ENCODE measurements at regions of chr6 and their contacts with region 1.

Region 1: GRCh38 chr6:21589352-21590345 is 3.9 kb upstream of the SOX4 start:
- DNase-seq: peak; percentile 92 to 97
- H3K4me3 ChIP-seq: peak overlapping the region; percentile 67 to 86 (median 73)
- H3K27ac ChIP-seq: peak overlapping the region; percentile 89 to 93 (median 90)
- H3K4me1 ChIP-seq: peaks cover 11 to 33% (median 28%) of the 10 kb centered on the region in 4 donors
- H3K27me3 ChIP-seq: no peaks in the 10 kb centered on the region
- CTCF ChIP-seq: peak in 5 of 7 experiments; percentile 77 to 89 (median 80)
- EP300 ChIP-seq: no peak
- POLR2A ChIP-seq: no peak

Region 2: GRCh38 chr6:20564269-20564668 is 1025.4 kb before region 1 on chr6:
- intact Hi-C with region 1: loop called (anchors 10 kb)
- DNase-seq: peak in 1 of 2 donors; percentile 55
- H3K4me3 ChIP-seq: no peak overlapping the region
- H3K27ac ChIP-seq: no peak overlapping the region
- H3K4me1 ChIP-seq: peaks cover 0 to 17% (median 6%) of the 10 kb centered on the region in 4 donors
- H3K27me3 ChIP-seq: no peaks in the 10 kb centered on the region
- CTCF ChIP-seq: peak in 5 of 7 experiments; percentile 38 to 69 (median 56)
- EP300 ChIP-seq: no peak
- POLR2A ChIP-seq: no peak

Measured in stomach (tissue), 19 donors.